GM12878 (cell line): ENCODE measurements at regions of chr11 and their contacts with region 1.

Region 1: GRCh38 chr11:8832571-8833260 is 78.3 kb upstream of the AKIP1 start:
- DNase-seq: peak; percentile 90
- ATAC-seq: peak; percentile 97
- H3K4me3 ChIP-seq: no peak overlapping the region
- H3K27ac ChIP-seq: peak overlapping the region; percentile 84
- H3K4me1 ChIP-seq: peaks cover 15% of the 10 kb centered on the region
- H3K27me3 ChIP-seq: no peaks in the 10 kb centered on the region
- CTCF ChIP-seq: peak in 1 of 3 experiments; percentile 12; a peak in 1 of 6 replicates
- EP300 ChIP-seq: no peak
- POLR2A ChIP-seq: peak; percentile 60
- RAD21 ChIP-seq: no peak

Region 2: DNA sequence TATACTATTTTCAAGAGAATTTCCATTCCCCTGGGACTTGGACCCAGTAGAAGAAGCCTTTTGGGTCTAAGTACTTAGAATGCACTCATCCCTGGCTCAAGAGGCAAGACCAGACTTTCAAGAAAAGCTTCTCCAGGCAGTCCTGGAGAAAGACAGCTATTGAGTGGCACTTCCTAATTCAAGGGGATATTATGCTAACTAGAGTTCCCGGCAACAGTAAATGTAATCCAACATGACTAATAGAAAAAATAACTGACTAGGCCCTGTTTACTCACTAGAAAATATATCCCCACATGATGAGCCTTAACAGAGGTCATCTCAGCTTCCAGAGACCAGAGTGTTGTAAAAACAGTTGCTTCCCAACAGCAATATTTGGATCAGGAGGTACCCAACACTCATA is 31.1 kb after region 1 on chr11:
- CTCF ChIA-PET with region 1: interaction called, 5 read pairs
- POLR2A ChIA-PET with region 1: interaction called, 12 read pairs
- RAD21 ChIA-PET with region 1: no interaction called
- SMC1A ChIA-PET with region 1: interaction called, 4 read pairs
- in situ Hi-C with region 1: no loop called
- intact Hi-C with region 1: no loop called
- DNase-seq: no peak
- ATAC-seq: no peak
- H3K4me3 ChIP-seq: no peak overlapping the region
- H3K27ac ChIP-seq: no peak overlapping the region
- H3K4me1 ChIP-seq: no peaks in the 10 kb centered on the region
- H3K27me3 ChIP-seq: no peaks in the 10 kb centered on the region
- CTCF ChIP-seq: no peak
- EP300 ChIP-seq: no peak
- POLR2A ChIP-seq: no peak
- RAD21 ChIP-seq: no peak